ENCODE measurements at regions of chr10 and their contacts with region 1.

Region 1: DNA sequence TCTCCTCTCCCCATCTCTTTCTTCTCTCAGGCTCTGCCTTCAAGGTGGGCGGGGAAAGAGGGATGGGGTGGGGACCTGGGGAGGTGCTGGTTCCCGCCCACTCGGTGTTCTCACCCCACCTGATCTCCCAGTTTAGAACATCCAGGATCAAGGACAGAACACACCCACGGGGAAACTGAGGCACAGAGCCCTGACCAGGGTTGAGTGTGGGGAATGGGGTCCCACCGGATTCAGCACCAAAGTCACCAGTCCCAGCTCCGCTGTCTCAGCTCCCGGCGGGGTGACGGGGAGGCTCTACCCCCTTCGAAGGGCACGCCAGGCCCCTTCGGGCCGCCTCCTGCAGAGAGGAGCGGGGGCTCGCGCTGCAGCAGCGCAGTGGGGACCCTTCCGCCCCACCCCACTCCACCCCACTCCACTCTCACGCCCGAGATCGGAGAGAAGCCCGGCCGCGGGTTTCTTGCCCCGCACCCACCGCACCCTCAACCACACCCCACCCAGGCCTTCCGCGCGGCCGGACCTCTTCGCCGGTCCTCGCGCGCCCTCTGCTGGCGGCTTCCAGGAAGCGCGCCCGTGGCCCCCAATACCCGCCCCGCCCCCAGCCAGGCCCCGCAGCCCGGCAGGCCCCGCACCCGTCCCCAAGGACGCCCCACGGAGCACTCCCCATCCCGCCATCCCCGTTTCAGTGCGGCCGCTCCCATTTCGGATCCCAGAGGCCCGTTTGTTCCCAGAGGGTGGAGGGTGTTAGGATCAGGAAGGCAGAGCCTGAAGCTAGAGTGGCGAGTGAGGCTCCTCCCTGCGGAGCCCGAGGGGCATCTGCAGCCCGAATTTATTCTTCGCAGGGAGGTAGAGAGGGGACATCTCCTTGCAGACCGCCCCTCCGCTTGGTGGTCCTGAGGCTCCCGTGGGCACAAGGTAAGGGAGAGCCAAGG is 18.0 kb downstream of the POLL start:
- DNase-seq: peak; percentile 76
- H3K4me3 ChIP-seq: peak overlapping the region; percentile 38 to 40
- H3K27ac ChIP-seq: no peak overlapping the region
- H3K4me1 ChIP-seq: no peaks in the 10 kb centered on the region
- H3K27me3 ChIP-seq: peaks cover 7% of the 10 kb centered on the region
- CTCF ChIP-seq: peak; percentile 78 to 96 (median 88)
- POLR2A ChIP-seq: no peak

Region 2: DNA sequence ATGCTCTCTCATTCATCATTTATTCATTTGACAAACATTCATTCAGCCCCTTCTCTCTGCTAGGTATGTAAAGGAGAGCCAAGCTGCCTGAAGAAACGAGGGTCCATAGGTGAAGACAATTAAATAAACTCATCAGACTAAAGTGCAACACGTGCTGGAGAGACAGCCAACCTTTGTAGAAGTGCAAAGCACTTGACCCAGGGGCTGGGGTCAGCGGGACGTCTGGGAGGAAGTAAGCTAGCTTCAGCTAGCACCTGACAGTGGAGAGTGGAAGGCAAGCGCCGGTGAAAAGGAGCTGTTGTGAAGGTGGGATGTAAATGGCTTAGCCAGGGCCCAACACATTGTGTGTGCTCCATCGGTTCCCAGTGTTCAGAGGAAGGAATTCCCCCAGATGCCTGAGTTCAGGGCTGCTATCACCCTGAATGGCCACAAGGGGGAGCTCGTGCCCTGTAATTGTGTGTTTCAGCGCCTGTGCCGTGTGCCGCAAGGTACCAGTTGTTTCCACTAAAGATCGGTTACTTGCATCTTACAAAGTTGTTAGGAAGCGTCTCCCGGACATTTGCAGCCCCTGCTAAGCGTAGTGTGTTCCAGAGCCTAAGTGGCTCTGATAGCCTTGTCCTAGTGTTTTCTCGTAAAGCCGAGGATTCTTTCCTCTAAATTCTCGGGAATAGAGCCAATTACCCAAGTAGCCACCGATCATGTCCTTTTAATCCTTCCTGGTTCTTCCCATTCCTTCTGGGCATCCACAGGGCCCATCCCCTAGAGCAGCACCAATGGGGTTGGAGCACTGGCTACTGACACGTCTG is 408.4 kb before region 1 on chr10:
- intact Hi-C with region 1: loop called (anchors 5 kb)
- DNase-seq: peak; percentile 56
- H3K4me3 ChIP-seq: no peak overlapping the region
- H3K27ac ChIP-seq: no peak overlapping the region
- H3K4me1 ChIP-seq: no peaks in the 10 kb centered on the region
- H3K27me3 ChIP-seq: peaks cover 9% of the 10 kb centered on the region
- CTCF ChIP-seq: peak; percentile 80 to 90 (median 88)
- POLR2A ChIP-seq: no peak

Region 3: GRCh38 chr10:101297901-101298486 is 272.1 kb before region 1 on chr10:
- intact Hi-C with region 1: loop called (anchors 10 kb)
- DNase-seq: peak; percentile 39
- H3K4me3 ChIP-seq: no peak overlapping the region
- H3K27ac ChIP-seq: no peak overlapping the region
- H3K4me1 ChIP-seq: no peaks in the 10 kb centered on the region
- H3K27me3 ChIP-seq: no peaks in the 10 kb centered on the region
- CTCF ChIP-seq: peak; percentile 48 to 69 (median 64)
- POLR2A ChIP-seq: no peak

Region 4: DNA sequence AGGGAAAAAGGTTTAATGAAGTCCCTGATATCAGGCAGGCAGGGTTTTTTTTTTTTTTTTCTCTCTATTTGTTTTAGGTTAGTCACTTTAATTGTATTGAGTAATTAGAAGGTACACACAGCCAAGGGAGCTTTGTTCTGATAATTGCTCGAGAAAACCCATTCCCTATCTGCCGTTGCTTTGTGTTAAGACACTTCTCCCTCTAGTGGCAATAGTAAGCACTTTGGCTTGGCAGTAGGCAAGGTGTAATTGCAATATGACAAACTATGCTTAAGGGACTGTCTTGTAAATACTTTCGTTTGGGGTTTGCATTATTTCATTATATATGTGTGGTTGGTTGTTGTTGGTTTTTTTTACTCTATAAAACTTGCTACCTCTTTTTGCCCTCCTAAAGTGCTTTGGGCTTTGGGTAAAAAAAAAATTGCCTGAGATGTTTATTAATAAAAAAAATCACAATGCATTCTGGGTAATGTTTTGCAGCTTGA is 102.8 kb before region 1 on chr10:
- intact Hi-C with region 1: loop called (anchors 10 kb)
- DNase-seq: peak; percentile 46
- H3K4me3 ChIP-seq: no peak overlapping the region
- H3K27ac ChIP-seq: no peak overlapping the region
- H3K4me1 ChIP-seq: no peaks in the 10 kb centered on the region
- H3K27me3 ChIP-seq: no peaks in the 10 kb centered on the region
- CTCF ChIP-seq: peak; percentile 45 to 76 (median 67)
- POLR2A ChIP-seq: no peak

Region 5: GRCh38 chr10:101529725-101530553 is 40.2 kb before region 1 on chr10:
- intact Hi-C with region 1: no loop called
- DNase-seq: peak; percentile 12
- H3K4me3 ChIP-seq: no peak overlapping the region
- H3K27ac ChIP-seq: no peak overlapping the region
- H3K4me1 ChIP-seq: no peaks in the 10 kb centered on the region
- H3K27me3 ChIP-seq: no peaks in the 10 kb centered on the region
- CTCF ChIP-seq: no peak
- POLR2A ChIP-seq: no peak

Measured in prostate gland (tissue), 2 donors.